Ascending aorta (tissue), 2 donors: ENCODE measurements at regions of chr9 and their contacts with region 1.

Region 1: GRCh38 chr9:105694190-105694847 is at the start of gene TMEM38B:
- DNase-seq: peak; percentile 25 to 87
- H3K4me3 ChIP-seq: peak within 1 kb of the TSS; percentile 74 to 83
- H3K27ac ChIP-seq: peak within 1 kb of the TSS; percentile 64 to 76
- H3K4me1 ChIP-seq: peaks cover 0 to 8% of the 10 kb centered on the region in 2 donors
- H3K27me3 ChIP-seq: no peaks in the 10 kb centered on the region
- CTCF ChIP-seq: no peak
- total RNA-seq, gene TMEM38B: 11.0 TPM

Region 2: GRCh38 chr9:104093647-104094533 is 1600.4 kb before region 1 on chr9 and contains the start of gene SMC2:
- intact Hi-C with region 1: loop called (anchors 10 kb)
- DNase-seq: peak; percentile 66 to 95
- H3K4me3 ChIP-seq: peak within 1 kb of the TSS; percentile 59 to 98
- H3K27ac ChIP-seq: peak within 1 kb of the TSS; percentile 88 to 95
- H3K4me1 ChIP-seq: peaks cover 5 to 19% of the 10 kb centered on the region in 2 donors
- H3K27me3 ChIP-seq: no peaks in the 10 kb centered on the region
- CTCF ChIP-seq: no peak
- total RNA-seq, gene SMC2: 2.4 TPM

Region 3: DNA sequence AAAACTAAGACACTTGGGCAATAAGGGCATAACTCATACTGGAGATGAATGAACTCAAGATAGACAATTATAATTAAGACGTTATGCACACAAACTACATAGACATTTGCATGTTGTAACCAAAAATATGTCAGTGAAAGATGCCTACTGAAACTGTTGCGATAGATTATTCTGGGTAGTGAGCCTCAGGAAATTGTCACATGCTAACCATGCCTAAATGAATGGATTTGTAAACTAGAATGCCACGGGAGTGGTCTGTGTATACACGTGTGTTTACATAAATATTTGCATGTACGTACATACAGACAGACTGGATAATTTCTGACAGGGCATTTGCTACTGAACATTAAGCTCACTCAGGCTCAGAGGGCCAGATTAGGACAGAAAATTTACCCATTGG is 929.2 kb before region 1 on chr9:
- intact Hi-C with region 1: loop called (anchors 10 kb)
- DNase-seq: no peak
- H3K4me3 ChIP-seq: peak overlapping the region in 1 of 2 donors; percentile 79
- H3K27ac ChIP-seq: no peak overlapping the region
- H3K4me1 ChIP-seq: peaks cover 0 to 6% of the 10 kb centered on the region in 2 donors
- H3K27me3 ChIP-seq: no peaks in the 10 kb centered on the region
- CTCF ChIP-seq: no peak

Region 4: GRCh38 chr9:105244003-105244733 is 450.2 kb before region 1 on chr9 and contains the start of gene SLC44A1:
- intact Hi-C with region 1: no loop called
- DNase-seq: peak; percentile 89 to 98
- H3K4me3 ChIP-seq: peak within 1 kb of the TSS; percentile 96 to 97
- H3K27ac ChIP-seq: peak within 1 kb of the TSS; percentile 78 to 88
- H3K4me1 ChIP-seq: peaks cover 14 to 25% of the 10 kb centered on the region in 2 donors
- H3K27me3 ChIP-seq: no peaks in the 10 kb centered on the region
- CTCF ChIP-seq: no peak
- total RNA-seq, gene SLC44A1: 26.5 TPM

Region 5: GRCh38 chr9:105447814-105448812 is 246.2 kb before region 1 on chr9 and contains the start of gene FSD1L:
- intact Hi-C with region 1: loop called (anchors 5 kb)
- DNase-seq: peak; percentile 67 to 94
- H3K4me3 ChIP-seq: peak within 1 kb of the TSS; percentile 77 to 88
- H3K27ac ChIP-seq: peak within 1 kb of the TSS; percentile 59 to 66
- H3K4me1 ChIP-seq: no peaks in the 10 kb centered on the region
- H3K27me3 ChIP-seq: no peaks in the 10 kb centered on the region
- CTCF ChIP-seq: peak in 2 of 3 experiments; percentile 19 to 27
- total RNA-seq, gene FSD1L: 0.43 TPM

Region 6: DNA sequence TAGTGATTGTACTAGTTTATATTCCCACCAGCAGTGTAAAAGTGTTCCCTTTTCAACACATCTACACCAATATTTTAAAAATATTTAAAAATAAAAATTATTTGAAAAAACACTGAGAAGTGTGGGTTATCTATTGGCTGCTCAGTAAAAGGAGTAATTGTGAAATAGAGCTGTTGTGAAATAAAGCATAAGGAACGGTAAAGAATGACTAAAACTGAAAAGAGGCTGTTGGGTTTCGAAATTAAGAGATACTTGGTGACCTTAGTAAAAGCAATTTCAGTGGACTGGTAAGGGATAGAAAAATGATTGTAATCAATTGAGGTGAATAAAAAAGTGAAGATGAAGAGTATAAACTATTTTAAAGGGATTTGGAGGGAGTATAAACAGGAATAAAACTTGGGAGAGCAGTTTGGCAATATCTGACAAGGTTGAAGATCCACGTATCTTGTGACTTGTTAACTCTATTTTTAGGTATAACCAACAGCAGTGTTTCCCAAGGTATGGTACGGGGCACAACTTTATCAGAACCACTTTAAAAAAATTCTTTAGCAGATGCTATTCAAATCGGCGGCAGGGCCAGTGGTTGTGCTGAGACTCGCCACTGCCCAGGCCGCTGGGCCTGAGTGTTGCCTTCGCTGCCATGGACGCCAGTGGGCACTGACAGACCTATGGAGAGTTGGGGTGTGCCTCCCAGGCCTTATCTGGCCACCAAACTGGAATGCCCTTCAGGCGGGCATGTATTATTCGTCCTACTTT is 63.4 kb after region 1 on chr9:
- intact Hi-C with region 1: no loop called
- DNase-seq: no peak
- H3K4me3 ChIP-seq: no peak overlapping the region
- H3K27ac ChIP-seq: no peak overlapping the region
- H3K4me1 ChIP-seq: no peaks in the 10 kb centered on the region
- H3K27me3 ChIP-seq: no peaks in the 10 kb centered on the region
- CTCF ChIP-seq: no peak